ENCODE measurements at regions of chr2 and their contacts with region 1.

Region 1: GRCh38 chr2:95174031-95174542 is 8.5 kb downstream of the ZNF2 start:
- DNase-seq: no peak
- ATAC-seq: no peak
- H3K4me3 ChIP-seq: no peak overlapping the region
- H3K27ac ChIP-seq: no peak overlapping the region
- H3K4me1 ChIP-seq: no peaks in the 10 kb centered on the region
- H3K27me3 ChIP-seq: no peaks in the 10 kb centered on the region
- CTCF ChIP-seq: no peak

Region 2: GRCh38 chr2:94939349-94939748 is 234.7 kb before region 1 on chr2:
- CTCF ChIA-PET with region 1: no interaction called
- POLR2A ChIA-PET with region 1: no interaction called
- in situ Hi-C with region 1: no loop called
- intact Hi-C with region 1: no loop called
- DNase-seq: no peak
- ATAC-seq: no peak
- H3K4me3 ChIP-seq: no peak overlapping the region
- H3K27ac ChIP-seq: no peak overlapping the region
- H3K4me1 ChIP-seq: no peaks in the 10 kb centered on the region
- H3K27me3 ChIP-seq: peaks cover 41% of the 10 kb centered on the region
- CTCF ChIP-seq: no peak

Region 3: GRCh38 chr2:95012881-95013550 is 161.1 kb before region 1 on chr2:
- CTCF ChIA-PET with region 1: no interaction called
- POLR2A ChIA-PET with region 1: no interaction called
- in situ Hi-C with region 1: no loop called
- intact Hi-C with region 1: no loop called
- DNase-seq: no peak
- ATAC-seq: no peak
- H3K4me3 ChIP-seq: no peak overlapping the region
- H3K27ac ChIP-seq: no peak overlapping the region
- H3K4me1 ChIP-seq: no peaks in the 10 kb centered on the region
- H3K27me3 ChIP-seq: no peaks in the 10 kb centered on the region
- CTCF ChIP-seq: no peak

Region 4: GRCh38 chr2:95159690-95160449 is 14.2 kb before region 1 on chr2 and contains the start of gene ZNF514:
- CTCF ChIA-PET with region 1: no interaction called
- POLR2A ChIA-PET with region 1: interaction called, 10 read pairs
- in situ Hi-C with region 1: no loop called
- intact Hi-C with region 1: no loop called
- DNase-seq: no peak
- ATAC-seq: peak; percentile 96
- H3K4me3 ChIP-seq: peak within 1 kb of the TSS; percentile 74
- H3K27ac ChIP-seq: peak within 1 kb of the TSS; percentile 84
- H3K4me1 ChIP-seq: peaks cover 13% of the 10 kb centered on the region
- H3K27me3 ChIP-seq: no peaks in the 10 kb centered on the region
- CTCF ChIP-seq: no peak
- total RNA-seq, gene ZNF514: 20.5 TPM

Measured in Panc1 (cell line).